ENCODE measurements at regions of chr6 and their contacts with region 1.

Region 1: GRCh38 chr6:153084409-153084808 is 46.7 kb downstream of the RGS17 start:
- DNase-seq: no peak
- ATAC-seq: peak; percentile 39; the same call in 2 of the 3 replicates
- H3K4me3 ChIP-seq: no peak overlapping the region
- H3K27ac ChIP-seq: no peak overlapping the region
- H3K4me1 ChIP-seq: no peaks in the 10 kb centered on the region
- H3K27me3 ChIP-seq: no peaks in the 10 kb centered on the region
- CTCF ChIP-seq: peak in 1 of 3 experiments; percentile 3; a peak in 1 of 6 replicates
- EP300 ChIP-seq: no peak
- POLR2A ChIP-seq: no peak
- RAD21 ChIP-seq: no peak

Region 2: GRCh38 chr6:152232501-152233151 is 851.8 kb before region 1 on chr6:
- CTCF ChIA-PET with region 1: no interaction called
- POLR2A ChIA-PET with region 1: no interaction called
- RAD21 ChIA-PET with region 1: no interaction called
- SMC1A ChIA-PET with region 1: no interaction called
- in situ Hi-C with region 1: no loop called
- intact Hi-C with region 1: no loop called
- DNase-seq: no peak
- ATAC-seq: no peak
- H3K4me3 ChIP-seq: no peak overlapping the region
- H3K27ac ChIP-seq: no peak overlapping the region
- H3K4me1 ChIP-seq: no peaks in the 10 kb centered on the region
- H3K27me3 ChIP-seq: no peaks in the 10 kb centered on the region
- CTCF ChIP-seq: no peak
- EP300 ChIP-seq: no peak
- POLR2A ChIP-seq: no peak
- RAD21 ChIP-seq: no peak

Region 3: DNA sequence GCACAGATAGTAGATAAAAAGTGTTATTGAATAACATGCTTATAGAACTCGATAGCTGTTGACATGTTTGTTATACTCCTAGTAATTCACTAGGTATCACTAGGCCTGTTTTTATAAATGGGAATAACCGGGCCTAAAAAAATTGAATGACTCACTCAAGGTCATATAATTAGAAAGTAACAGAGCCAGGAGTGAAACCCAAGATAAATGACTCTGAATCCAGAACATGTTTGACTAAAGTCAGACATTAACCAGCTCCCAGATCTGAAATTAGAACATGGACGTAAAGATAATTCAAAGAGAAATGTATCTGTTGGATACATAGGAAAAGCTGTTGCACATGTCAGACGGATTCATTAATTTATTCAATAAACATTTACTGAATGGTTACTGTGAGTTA is 19.8 kb after region 1 on chr6:
- CTCF ChIA-PET with region 1: interaction called, 7 read pairs
- POLR2A ChIA-PET with region 1: no interaction called
- RAD21 ChIA-PET with region 1: interaction called, 5 read pairs
- SMC1A ChIA-PET with region 1: interaction called, 10 read pairs
- in situ Hi-C with region 1: no loop called
- intact Hi-C with region 1: no loop called
- DNase-seq: no peak
- ATAC-seq: no peak; the same call in none of the 3 replicates
- H3K4me3 ChIP-seq: no peak overlapping the region
- H3K27ac ChIP-seq: no peak overlapping the region
- H3K4me1 ChIP-seq: no peaks in the 10 kb centered on the region
- H3K27me3 ChIP-seq: no peaks in the 10 kb centered on the region
- CTCF ChIP-seq: no peak
- EP300 ChIP-seq: no peak
- POLR2A ChIP-seq: no peak
- RAD21 ChIP-seq: no peak

Region 4: GRCh38 chr6:153125032-153125431 is 40.6 kb after region 1 on chr6:
- CTCF ChIA-PET with region 1: no interaction called
- POLR2A ChIA-PET with region 1: no interaction called
- RAD21 ChIA-PET with region 1: no interaction called
- SMC1A ChIA-PET with region 1: no interaction called
- in situ Hi-C with region 1: no loop called
- intact Hi-C with region 1: no loop called
- DNase-seq: no peak
- ATAC-seq: no peak
- H3K4me3 ChIP-seq: no peak overlapping the region
- H3K27ac ChIP-seq: no peak overlapping the region
- H3K4me1 ChIP-seq: no peaks in the 10 kb centered on the region
- H3K27me3 ChIP-seq: peaks cover 0 to 12% of the 10 kb centered on the region in 2 experiments; a peak in 2 of 4 replicates
- CTCF ChIP-seq: no peak
- EP300 ChIP-seq: no peak
- POLR2A ChIP-seq: no peak
- RAD21 ChIP-seq: no peak

Region 5: DNA sequence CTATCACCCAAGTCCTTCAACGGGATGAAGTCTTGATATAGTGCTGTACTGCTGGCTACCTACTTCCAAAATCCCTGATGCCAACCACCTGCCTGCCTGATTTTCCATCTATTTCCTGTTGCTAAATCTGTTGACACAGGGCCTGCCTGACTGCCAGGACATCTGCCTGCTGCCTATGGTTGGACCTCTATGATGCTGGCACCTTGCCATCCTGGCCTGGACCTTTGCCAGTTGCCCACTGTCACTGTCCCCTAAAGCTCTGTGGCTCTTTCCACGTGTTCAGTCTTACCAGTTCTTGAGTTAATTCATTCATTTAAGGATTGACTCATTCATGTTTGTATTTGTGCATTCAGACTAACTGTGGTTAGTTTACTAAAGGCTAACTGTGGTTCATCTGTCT is 55.9 kb after region 1 on chr6:
- CTCF ChIA-PET with region 1: no interaction called
- POLR2A ChIA-PET with region 1: no interaction called
- RAD21 ChIA-PET with region 1: no interaction called
- SMC1A ChIA-PET with region 1: no interaction called
- in situ Hi-C with region 1: no loop called
- intact Hi-C with region 1: no loop called
- DNase-seq: no peak
- ATAC-seq: no peak
- H3K4me3 ChIP-seq: no peak overlapping the region
- H3K27ac ChIP-seq: no peak overlapping the region
- H3K4me1 ChIP-seq: no peaks in the 10 kb centered on the region
- H3K27me3 ChIP-seq: no peaks in the 10 kb centered on the region
- CTCF ChIP-seq: no peak
- EP300 ChIP-seq: no peak
- POLR2A ChIP-seq: no peak
- RAD21 ChIP-seq: no peak

Measured in GM12878 (cell line).